ENCODE measurements at regions of chr3 and their contacts with region 1.

Region 1: DNA sequence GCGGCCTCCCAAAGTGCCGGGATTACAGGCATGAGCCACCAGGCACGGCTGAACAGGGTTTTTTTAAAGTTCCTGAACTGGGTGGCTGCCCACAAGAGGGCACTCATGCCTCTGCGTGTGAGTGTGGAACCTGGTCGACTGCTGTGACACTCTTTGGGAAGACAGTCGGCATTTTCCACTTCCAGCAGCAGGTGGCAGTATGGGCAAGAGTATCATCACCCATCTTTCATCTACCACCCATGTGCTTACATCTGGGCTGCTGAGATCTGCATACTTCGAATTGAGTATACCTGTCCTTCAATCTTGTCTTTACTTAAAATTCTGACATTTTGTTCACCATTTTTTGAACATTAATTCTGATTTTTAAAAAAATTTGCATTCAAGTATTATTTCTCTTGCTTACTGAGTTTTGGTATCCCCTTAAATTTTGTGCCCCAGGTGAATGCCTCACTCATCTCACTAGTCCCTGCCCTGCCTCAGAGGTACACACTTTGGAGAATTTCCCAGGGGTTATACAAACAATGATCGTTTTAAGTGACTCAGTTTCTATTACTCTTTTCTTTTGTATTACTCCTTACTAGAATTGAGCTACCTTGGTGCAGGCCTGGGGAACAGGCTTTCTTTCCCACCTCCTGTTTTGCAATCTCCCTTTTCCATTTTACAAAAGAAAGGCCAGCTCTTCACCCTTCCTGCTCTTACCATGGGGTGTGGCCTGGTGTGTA is 11.8 kb downstream of the CLEC3B start:
- DNase-seq: peak; percentile 90
- H3K4me3 ChIP-seq: peak overlapping the region in 1 of 2 experiments; percentile 32; a peak in 1 of 4 replicates
- H3K27ac ChIP-seq: no peak overlapping the region
- H3K4me1 ChIP-seq: no peaks in the 10 kb centered on the region; a peak in 1 of 4 replicates
- H3K27me3 ChIP-seq: no peaks in the 10 kb centered on the region
- CTCF ChIP-seq: peak; percentile 98
- EP300 ChIP-seq: no peak
- RAD21 ChIP-seq: peak; percentile 96

Region 2: GRCh38 chr3:45055411-45056143 is 17.7 kb after region 1 on chr3:
- CTCF ChIA-PET with region 1: interaction called, 129 read pairs
- POLR2A ChIA-PET with region 1: no interaction called
- DNase-seq: peak; percentile 59
- H3K4me3 ChIP-seq: no peak overlapping the region
- H3K27ac ChIP-seq: peak overlapping the region in 1 of 2 experiments; percentile 67; a peak in 2 of 4 replicates
- H3K4me1 ChIP-seq: peaks cover 0 to 17% of the 10 kb centered on the region in 2 experiments; a peak in 2 of 4 replicates
- H3K27me3 ChIP-seq: no peaks in the 10 kb centered on the region
- CTCF ChIP-seq: peak; percentile 53
- EP300 ChIP-seq: no peak
- RAD21 ChIP-seq: peak; percentile 55

Region 3: GRCh38 chr3:45499529-45499928 is 461.6 kb after region 1 on chr3:
- CTCF ChIA-PET with region 1: interaction called, 84 read pairs
- POLR2A ChIA-PET with region 1: no interaction called
- DNase-seq: peak; percentile 51
- H3K4me3 ChIP-seq: no peak overlapping the region
- H3K27ac ChIP-seq: no peak overlapping the region
- H3K4me1 ChIP-seq: no peaks in the 10 kb centered on the region
- H3K27me3 ChIP-seq: no peaks in the 10 kb centered on the region
- CTCF ChIP-seq: peak; percentile 68
- EP300 ChIP-seq: no peak
- RAD21 ChIP-seq: peak; percentile 71

Region 4: DNA sequence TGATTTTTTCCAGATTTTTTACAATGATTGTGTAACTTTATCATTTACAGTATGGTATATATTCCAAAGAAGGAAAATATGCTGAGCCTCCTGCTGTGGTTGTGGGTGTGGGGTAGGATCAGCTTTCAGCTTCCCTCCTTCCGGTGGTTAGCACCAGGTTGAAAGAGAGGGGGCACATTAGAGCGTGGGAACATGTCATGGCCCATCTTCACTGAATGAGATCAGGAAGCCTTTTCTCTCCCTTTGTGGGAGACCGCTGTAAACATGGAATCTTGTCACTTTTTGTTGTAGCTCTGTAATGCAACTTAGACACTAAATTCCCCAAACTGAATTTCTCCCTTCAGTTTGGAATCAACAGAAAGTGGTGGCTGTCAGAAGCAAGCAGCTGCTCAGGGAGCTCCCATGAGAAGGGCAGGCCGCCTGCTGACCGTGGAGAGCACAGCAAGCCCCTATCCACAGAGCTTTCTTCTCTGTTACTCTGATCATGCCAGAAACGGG is 470.0 kb after region 1 on chr3:
- CTCF ChIA-PET with region 1: interaction called, 28 read pairs
- POLR2A ChIA-PET with region 1: no interaction called
- DNase-seq: peak; percentile 30
- H3K4me3 ChIP-seq: peak overlapping the region in 1 of 2 experiments; percentile 5; a peak in 1 of 4 replicates
- H3K27ac ChIP-seq: peak overlapping the region in 1 of 2 experiments; percentile 76; a peak in 2 of 4 replicates
- H3K4me1 ChIP-seq: peaks cover 2 to 30% of the 10 kb centered on the region in 2 experiments; a peak in 3 of 4 replicates
- H3K27me3 ChIP-seq: no peaks in the 10 kb centered on the region
- CTCF ChIP-seq: peak; percentile 48
- EP300 ChIP-seq: no peak
- RAD21 ChIP-seq: peak; percentile 43